ENCODE measurements at regions of chr17 and their contacts with region 1.

Region 1: GRCh38 chr17:75979705-75980187 is 706 bp downstream of the TEN1 start:
- DNase-seq: no peak
- H3K4me3 ChIP-seq: peak overlapping the region; percentile 68 to 87
- H3K27ac ChIP-seq: peak overlapping the region; percentile 96 to 98
- H3K4me1 ChIP-seq: peaks cover 0 to 20% of the 10 kb centered on the region in 2 experiments; a peak in 3 of 4 replicates
- H3K27me3 ChIP-seq: no peaks in the 10 kb centered on the region
- CTCF ChIP-seq: no peak
- EP300 ChIP-seq: no peak
- RAD21 ChIP-seq: no peak

Region 2: DNA sequence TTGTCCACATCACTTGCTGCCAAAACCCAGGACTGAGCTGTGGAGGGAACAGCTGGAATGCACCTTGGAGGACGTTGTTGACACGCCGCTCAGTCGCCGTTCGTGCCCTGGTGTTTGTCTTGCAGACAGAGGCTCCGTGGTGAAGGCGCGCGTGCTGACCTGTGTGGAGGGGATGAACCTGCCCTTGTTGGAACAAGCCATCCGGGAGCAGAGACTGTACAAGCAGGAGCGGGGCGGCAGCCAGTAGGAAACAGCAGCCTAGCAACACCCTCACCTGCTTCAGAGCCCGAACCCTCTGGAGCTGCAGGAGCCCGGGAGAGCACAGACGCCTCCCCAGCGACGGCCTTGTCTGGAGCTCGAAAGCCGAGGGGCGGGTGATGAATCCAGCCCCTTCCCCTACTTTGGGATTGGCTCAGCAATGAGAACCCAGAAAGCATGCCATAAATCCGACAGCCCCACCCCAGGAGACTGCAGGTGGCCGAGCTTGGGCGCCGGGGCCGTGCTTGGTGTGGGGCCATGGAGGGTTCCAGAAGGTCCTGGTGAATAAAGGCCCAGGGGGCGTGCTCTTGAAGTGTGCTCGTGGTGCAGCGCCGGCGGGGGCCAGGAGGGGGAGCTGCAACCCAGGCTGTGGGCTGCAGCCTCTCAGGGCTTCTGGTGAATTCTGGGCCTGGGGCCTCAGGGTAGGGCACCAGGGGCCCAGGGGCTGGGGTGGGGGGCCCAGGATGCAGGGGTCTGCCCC is 20.4 kb after region 1 on chr17:
- CTCF ChIA-PET with region 1: interaction called, 21 read pairs
- POLR2A ChIA-PET with region 1: no interaction called
- DNase-seq: peak; percentile 98
- H3K4me3 ChIP-seq: no peak overlapping the region; a peak in 1 of 4 replicates
- H3K27ac ChIP-seq: no peak overlapping the region; a peak in 1 of 4 replicates
- H3K4me1 ChIP-seq: peaks cover 0 to 13% of the 10 kb centered on the region in 2 experiments; a peak in 2 of 4 replicates
- H3K27me3 ChIP-seq: no peaks in the 10 kb centered on the region
- CTCF ChIP-seq: peak; percentile 94
- EP300 ChIP-seq: peak in 1 of 2 experiments; percentile 31; a peak in 1 of 4 replicates
- RAD21 ChIP-seq: peak; percentile 72

Region 3: DNA sequence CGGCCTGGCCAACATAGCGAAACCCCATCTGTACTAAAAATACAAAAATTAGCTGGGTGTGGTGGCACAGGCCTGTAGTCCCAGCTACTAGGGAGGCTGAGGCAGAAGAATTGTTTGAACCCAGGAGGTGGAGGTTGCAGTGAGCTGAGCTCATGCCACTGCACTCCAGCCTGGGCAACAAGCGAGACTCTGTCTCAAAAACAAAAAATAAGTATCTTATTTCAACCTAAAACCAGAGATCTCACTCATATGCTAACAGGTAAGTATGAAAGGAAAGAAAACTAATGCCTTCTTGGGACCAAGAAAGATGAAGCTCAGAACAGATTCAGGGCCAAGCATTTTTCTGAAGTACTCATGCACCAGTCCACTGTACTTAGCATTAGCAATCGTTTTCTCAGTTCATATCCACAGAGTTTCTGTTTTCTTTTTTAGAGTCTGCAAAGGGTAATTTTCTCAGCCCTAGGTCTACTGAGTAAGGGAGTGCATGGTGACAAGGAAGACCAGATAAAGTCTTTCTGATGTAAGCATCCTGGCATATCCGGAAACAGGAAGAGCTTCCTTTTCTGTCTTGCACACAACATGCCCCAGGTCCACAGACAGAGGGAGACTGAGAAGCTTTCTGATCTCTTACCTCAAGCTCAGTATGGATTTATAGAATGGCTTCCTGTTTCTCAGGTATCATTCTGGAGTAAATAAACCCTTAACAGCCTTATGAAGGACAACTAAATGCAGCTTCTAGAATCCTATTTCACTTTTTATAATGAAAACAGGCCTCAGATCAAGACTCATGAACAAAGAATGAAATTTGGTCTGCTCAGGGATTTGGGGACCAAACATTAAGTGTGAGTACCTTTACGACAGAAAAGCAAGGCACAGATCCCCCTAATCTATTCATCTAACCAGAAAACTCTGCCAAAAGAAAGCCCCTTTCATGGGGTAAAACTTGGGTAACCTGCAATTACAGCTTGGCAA is 200.0 kb after region 1 on chr17:
- CTCF ChIA-PET with region 1: no interaction called
- POLR2A ChIA-PET with region 1: no interaction called
- DNase-seq: no peak
- H3K4me3 ChIP-seq: no peak overlapping the region
- H3K27ac ChIP-seq: no peak overlapping the region
- H3K4me1 ChIP-seq: peaks cover 0 to 3% of the 10 kb centered on the region in 2 experiments; a peak in 1 of 4 replicates
- H3K27me3 ChIP-seq: no peaks in the 10 kb centered on the region
- CTCF ChIP-seq: no peak
- EP300 ChIP-seq: no peak
- RAD21 ChIP-seq: no peak